PC-9 (cell line): ENCODE measurements at regions of chr9 and their contacts with region 1.

Region 1: GRCh38 chr9:110256380-110257096 is at the start of gene TXN:
- DNase-seq: peak; percentile 92 to 100
- H3K4me3 ChIP-seq: peak within 1 kb of the TSS; percentile 79
- H3K27ac ChIP-seq: peak within 1 kb of the TSS; percentile 99
- H3K4me1 ChIP-seq: peaks cover 49% of the 10 kb centered on the region
- H3K27me3 ChIP-seq: no peaks in the 10 kb centered on the region
- CTCF ChIP-seq: no peak
- total RNA-seq, gene TXN: 1,110 and 1,260 TPM in 2 replicates

Region 2: GRCh38 chr9:110192531-110193261 is 63.8 kb before region 1 on chr9:
- CTCF ChIA-PET with region 1: no interaction called
- POLR2A ChIA-PET with region 1: no interaction called
- intact Hi-C with region 1: loop called (anchors 5 kb)
- DNase-seq: peak in 1 of 2 experiments; percentile 86
- H3K4me3 ChIP-seq: no peak overlapping the region
- H3K27ac ChIP-seq: peak overlapping the region; percentile 37
- H3K4me1 ChIP-seq: peaks cover 29% of the 10 kb centered on the region
- H3K27me3 ChIP-seq: no peaks in the 10 kb centered on the region
- CTCF ChIP-seq: no peak

Region 3: GRCh38 chr9:110351009-110351467 is 94.5 kb after region 1 on chr9:
- CTCF ChIA-PET with region 1: no interaction called
- POLR2A ChIA-PET with region 1: interaction called, 67 read pairs
- intact Hi-C with region 1: loop called (anchors 1 kb)
- DNase-seq: peak; percentile 72 to 97
- H3K4me3 ChIP-seq: no peak overlapping the region
- H3K27ac ChIP-seq: peak overlapping the region; percentile 73
- H3K4me1 ChIP-seq: peaks cover 23% of the 10 kb centered on the region
- H3K27me3 ChIP-seq: no peaks in the 10 kb centered on the region
- CTCF ChIP-seq: no peak

Region 4: GRCh38 chr9:110427497-110428104 is 171.1 kb after region 1 on chr9:
- CTCF ChIA-PET with region 1: no interaction called
- POLR2A ChIA-PET with region 1: no interaction called
- intact Hi-C with region 1: loop called (anchors 2 kb)
- DNase-seq: peak in 1 of 2 experiments; percentile 43
- H3K4me3 ChIP-seq: no peak overlapping the region
- H3K27ac ChIP-seq: no peak overlapping the region
- H3K4me1 ChIP-seq: no peaks in the 10 kb centered on the region
- H3K27me3 ChIP-seq: no peaks in the 10 kb centered on the region
- CTCF ChIP-seq: peak; percentile 56

Region 5: DNA sequence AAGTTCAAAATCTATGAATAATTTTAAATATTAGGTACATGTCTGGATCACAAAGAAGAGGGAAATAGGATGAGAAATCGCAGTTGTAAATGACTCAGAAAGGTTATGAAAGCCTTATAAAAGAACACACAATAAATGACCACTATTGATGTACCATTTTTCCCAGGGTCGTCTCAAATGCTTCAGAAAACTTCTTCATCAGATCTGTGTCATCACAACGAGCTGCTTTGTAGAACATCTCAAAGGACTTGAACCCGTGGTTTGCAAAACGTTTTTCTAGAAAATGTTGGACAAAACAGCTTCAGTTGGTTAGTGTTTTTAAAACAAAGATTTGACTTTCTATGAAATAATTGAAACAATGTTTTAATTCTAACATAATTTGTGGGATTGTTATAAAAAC is 222.9 kb after region 1 on chr9:
- CTCF ChIA-PET with region 1: no interaction called
- POLR2A ChIA-PET with region 1: interaction called, 12 read pairs
- intact Hi-C with region 1: no loop called
- DNase-seq: no peak
- H3K4me3 ChIP-seq: no peak overlapping the region
- H3K27ac ChIP-seq: no peak overlapping the region
- H3K4me1 ChIP-seq: no peaks in the 10 kb centered on the region
- H3K27me3 ChIP-seq: no peaks in the 10 kb centered on the region
- CTCF ChIP-seq: no peak

Region 6: GRCh38 chr9:110623462-110624025 is 367.0 kb after region 1 on chr9:
- CTCF ChIA-PET with region 1: interaction called, 9 read pairs
- POLR2A ChIA-PET with region 1: interaction called, 21 read pairs
- intact Hi-C with region 1: loop called (anchors 1 kb)
- DNase-seq: peak; percentile 48 to 58
- H3K4me3 ChIP-seq: no peak overlapping the region
- H3K27ac ChIP-seq: no peak overlapping the region
- H3K4me1 ChIP-seq: no peaks in the 10 kb centered on the region
- H3K27me3 ChIP-seq: no peaks in the 10 kb centered on the region
- CTCF ChIP-seq: peak; percentile 87